Dorsolateral prefrontal cortex (tissue), 120 donors: ENCODE measurements at regions of chr14 and their contacts with region 1.

Region 1: GRCh38 chr14:68795597-68796417 is 2.9 kb upstream of the ZFP36L1 start:
- DNase-seq: peak in 5 of 10 donors; percentile 50 to 70 (median 65)
- H3K4me3 ChIP-seq: peak overlapping the region; percentile 46 to 83 (median 66)
- H3K27ac ChIP-seq: peak overlapping the region; percentile 9 to 99 (median 94)
- H3K27me3 ChIP-seq: peaks cover 0 to 56% (median 24%) of the 10 kb centered on the region in 45 donors
- CTCF ChIP-seq: peak in 53 of 56 donors; percentile 11 to 65 (median 45)

Region 2: GRCh38 chr14:68598621-68599447 is 197.0 kb before region 1 on chr14:
- intact Hi-C with region 1: no loop called
- DNase-seq: no peak
- H3K4me3 ChIP-seq: peak overlapping the region in 11 of 59 donors; percentile 1 to 25 (median 8)
- H3K27ac ChIP-seq: peak overlapping the region; percentile 6 to 94 (median 82)
- H3K27me3 ChIP-seq: no peaks in the 10 kb centered on the region
- CTCF ChIP-seq: no peak

Region 3: DNA sequence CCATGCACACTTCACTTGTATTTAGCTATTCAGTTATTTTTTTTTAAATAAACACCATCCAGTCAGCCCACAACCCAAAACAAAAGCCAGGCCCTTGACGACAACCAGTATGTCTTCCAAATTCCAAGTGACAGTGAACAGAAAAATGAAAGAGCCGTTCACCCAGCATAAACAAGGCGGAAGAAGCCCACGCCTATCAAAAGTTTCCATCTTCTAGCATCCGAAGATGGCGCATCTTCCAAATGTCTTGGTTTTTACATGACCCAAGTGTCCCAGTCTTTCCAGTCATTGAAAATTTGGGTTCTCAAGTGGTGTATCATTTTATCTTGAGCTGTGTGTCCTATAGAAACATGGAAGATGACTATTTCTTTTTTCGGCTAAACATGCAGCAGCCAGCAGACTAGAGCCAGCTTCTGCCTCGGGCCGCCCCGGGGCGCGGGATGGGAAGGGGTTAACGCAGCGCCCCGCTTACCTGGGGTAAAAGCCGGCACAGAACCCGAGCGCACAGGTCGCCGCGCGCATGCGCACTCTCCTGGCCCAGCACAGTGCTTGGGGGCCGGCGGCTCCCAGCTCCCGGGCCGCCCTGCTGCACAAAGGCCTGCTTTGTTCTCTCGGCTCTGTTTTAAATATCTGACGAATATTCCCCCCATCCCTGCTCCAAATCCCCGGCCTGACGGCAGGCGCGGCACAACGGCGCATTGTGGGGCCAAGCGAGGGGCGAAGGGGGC is 167.8 kb before region 1 on chr14:
- intact Hi-C with region 1: loop called (anchors 5 kb)
- DNase-seq: peak; percentile 25 to 82 (median 76)
- H3K4me3 ChIP-seq: peak overlapping the region; percentile 26 to 80 (median 59)
- H3K27ac ChIP-seq: peak overlapping the region; percentile 18 to 97 (median 82)
- H3K27me3 ChIP-seq: no peaks in the 10 kb centered on the region
- CTCF ChIP-seq: peak in 2 of 56 donors; percentile 8 to 27

Region 4: DNA sequence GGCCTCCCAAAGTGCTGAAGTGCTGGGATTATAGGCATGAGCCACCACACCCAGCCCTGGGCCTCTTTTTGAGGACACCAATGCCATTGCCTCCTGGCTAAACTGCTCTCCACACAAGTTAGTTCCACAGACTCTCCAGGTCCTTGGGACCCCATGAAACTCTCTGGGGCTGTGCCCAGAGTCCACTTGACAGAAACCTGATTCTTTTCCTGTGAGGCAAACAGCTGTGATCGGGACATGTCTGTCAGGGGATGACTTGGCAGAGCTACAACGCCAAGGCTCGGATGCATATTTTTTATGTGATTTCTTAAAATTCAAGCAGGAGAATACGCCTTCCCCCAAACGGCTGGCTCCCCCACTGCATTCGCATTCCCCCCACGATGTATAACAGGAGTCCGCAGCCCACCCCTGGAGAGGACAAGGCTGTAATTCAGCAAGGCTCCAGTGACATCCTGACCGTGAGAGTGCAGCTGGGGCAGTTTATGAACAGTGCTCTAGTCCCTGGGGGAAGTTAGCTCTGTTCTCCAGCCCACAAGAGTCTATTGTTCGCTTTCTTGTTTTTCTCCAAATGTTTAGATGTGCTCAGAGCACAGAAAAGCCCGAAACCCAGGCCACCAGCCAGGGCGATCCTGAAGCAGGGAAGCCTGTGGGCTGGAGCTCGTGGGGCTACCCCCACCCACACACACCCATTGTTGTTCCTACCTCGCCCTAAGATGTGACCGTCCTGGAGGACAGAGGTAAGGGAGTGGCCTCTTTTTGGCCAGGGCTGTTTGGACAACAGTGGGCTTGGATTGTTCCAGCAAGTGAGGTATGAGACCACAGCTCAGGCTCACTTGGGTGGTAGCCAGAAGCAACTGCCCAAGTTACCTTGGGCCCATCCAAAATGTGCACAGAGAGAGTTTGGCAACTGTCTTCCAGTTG is 162.5 kb before region 1 on chr14:
- intact Hi-C with region 1: loop called (anchors 5 kb)
- DNase-seq: peak in 9 of 10 donors; percentile 20 to 80 (median 75)
- H3K4me3 ChIP-seq: peak overlapping the region in 19 of 59 donors; percentile 1 to 41 (median 11)
- H3K27ac ChIP-seq: peak overlapping the region; percentile 68 to 97 (median 89)
- H3K27me3 ChIP-seq: no peaks in the 10 kb centered on the region
- CTCF ChIP-seq: peak in 11 of 56 donors; percentile 5 to 28 (median 8)